ENCODE measurements at regions of chr10 and their contacts with region 1.

Region 1: DNA sequence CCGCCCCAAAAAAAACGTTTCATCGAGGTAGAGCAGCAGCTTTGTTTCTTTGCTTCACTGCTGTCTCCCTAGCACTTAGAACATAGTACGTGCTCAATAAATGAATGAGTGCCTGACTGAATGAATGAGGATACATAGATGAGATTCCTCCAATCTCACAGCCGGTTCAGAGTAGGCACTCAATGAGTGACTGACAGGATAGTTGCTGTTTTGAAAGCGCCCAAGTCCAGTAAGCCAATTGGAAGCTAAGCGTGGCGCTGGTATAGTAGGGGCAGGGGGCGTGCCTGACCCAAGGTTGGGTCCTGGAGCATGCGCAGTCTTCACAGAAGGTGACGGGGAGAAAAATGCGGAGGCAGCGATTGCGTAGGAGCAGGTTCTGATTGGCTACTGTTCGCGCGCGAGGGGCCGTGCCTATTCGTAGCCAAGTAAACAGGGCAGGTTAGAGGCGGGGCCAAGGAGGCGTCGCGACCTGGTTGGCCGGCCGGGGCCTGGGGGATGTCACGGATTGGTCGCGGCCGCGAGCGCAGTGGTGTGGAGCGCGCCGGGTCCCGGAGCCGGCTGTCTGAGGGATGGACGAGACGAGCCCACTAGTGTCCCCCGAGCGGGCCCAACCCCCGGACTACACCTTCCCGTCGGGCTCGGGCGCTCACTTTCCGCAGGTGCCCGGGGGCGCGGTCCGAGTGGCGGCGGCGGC is at the start of gene PI4K2A:
- DNase-seq: peak; percentile 97 to 100 (median 98)

Region 2: DNA sequence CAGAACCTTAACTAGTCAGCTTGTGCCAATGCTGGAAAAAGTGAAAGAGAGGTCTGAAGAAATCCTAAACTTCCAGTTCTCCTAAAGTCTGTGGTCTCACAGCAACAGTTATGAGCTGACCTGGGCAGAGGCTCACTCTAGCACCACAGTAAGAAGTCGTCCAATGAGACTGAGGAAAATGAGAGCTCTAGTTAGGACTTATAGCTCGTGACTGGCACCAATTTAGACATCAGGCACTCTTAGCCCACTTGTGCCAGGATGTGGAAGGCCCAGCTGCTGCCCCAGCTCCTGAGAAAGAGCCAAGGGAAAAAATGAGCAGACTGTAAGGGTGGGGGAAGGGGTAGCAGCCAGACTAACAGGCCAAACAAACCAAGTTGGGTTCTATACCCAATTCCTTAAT is 149.7 kb before region 1 on chr10:
- intact Hi-C with region 1: loop called (anchors 5 kb)
- DNase-seq: peak in 9 of 10 donors; percentile 33 to 90 (median 41)

Region 3: GRCh38 chr10:97686962-97687784 is 46.9 kb after region 1 on chr10 and contains the start of gene AVPI1:
- intact Hi-C with region 1: loop called (anchors 1 kb)
- DNase-seq: peak; percentile 83 to 99 (median 92)